Esophagus squamous epithelium (tissue), 5 donors: ENCODE measurements at regions of chr4 and their contacts with region 1.

Region 1: GRCh38 chr4:128863312-128864075 is 54.0 kb downstream of the JADE1 start:
- DNase-seq: no peak
- H3K4me3 ChIP-seq: no peak overlapping the region
- H3K27ac ChIP-seq: peak overlapping the region in 1 of 4 donors; percentile 23
- H3K4me1 ChIP-seq: peaks cover 0 to 47% (median 0%) of the 10 kb centered on the region in 3 donors
- H3K27me3 ChIP-seq: no peaks in the 10 kb centered on the region
- CTCF ChIP-seq: peak; percentile 79 to 88 (median 84)
- POLR2A ChIP-seq: no peak

Region 2: GRCh38 chr4:128191115-128191781 is 672.2 kb before region 1 on chr4:
- intact Hi-C with region 1: loop called (anchors 10 kb)
- DNase-seq: no peak
- H3K4me3 ChIP-seq: no peak overlapping the region
- H3K27ac ChIP-seq: no peak overlapping the region
- H3K4me1 ChIP-seq: peaks cover 0 to 8% (median 0%) of the 10 kb centered on the region in 3 donors
- H3K27me3 ChIP-seq: no peaks in the 10 kb centered on the region
- CTCF ChIP-seq: peak; percentile 67 to 83 (median 75)
- POLR2A ChIP-seq: no peak

Region 3: GRCh38 chr4:128454281-128455075 is 409.0 kb before region 1 on chr4:
- intact Hi-C with region 1: loop called (anchors 10 kb)
- DNase-seq: peak; percentile 5
- H3K4me3 ChIP-seq: no peak overlapping the region
- H3K27ac ChIP-seq: no peak overlapping the region
- H3K4me1 ChIP-seq: peaks cover 0 to 25% (median 0%) of the 10 kb centered on the region in 3 donors
- H3K27me3 ChIP-seq: no peaks in the 10 kb centered on the region
- CTCF ChIP-seq: peak; percentile 54 to 82 (median 72)
- POLR2A ChIP-seq: no peak

Region 4: GRCh38 chr4:128565565-128566186 is 297.8 kb before region 1 on chr4:
- intact Hi-C with region 1: loop called (anchors 10 kb)
- DNase-seq: no peak
- H3K4me3 ChIP-seq: no peak overlapping the region
- H3K27ac ChIP-seq: no peak overlapping the region
- H3K4me1 ChIP-seq: peaks cover 0 to 18% (median 16%) of the 10 kb centered on the region in 3 donors
- H3K27me3 ChIP-seq: no peaks in the 10 kb centered on the region
- CTCF ChIP-seq: peak in 5 of 6 experiments; percentile 13 to 46 (median 29)
- POLR2A ChIP-seq: no peak

Region 5: DNA sequence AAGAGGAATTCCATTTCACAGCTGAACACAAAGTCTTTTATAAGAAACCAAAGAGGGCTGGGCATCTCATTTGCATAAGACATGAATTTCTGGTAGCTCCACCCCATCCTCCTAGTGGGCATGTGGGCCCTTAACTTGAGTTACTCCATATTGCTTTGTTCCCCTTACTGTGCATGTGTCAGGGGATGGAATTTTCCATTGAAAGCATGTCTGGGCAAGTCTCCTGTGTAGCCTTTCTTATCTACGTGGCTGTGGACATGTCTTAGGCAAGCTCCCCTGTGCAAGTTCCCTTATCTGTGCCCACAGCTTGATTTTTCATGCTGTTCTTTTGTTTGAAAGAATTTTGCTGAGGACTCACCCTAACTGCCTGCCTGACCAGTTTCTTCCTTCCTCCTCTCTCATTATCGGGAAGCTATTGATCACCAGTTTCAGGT is 177.4 kb before region 1 on chr4:
- intact Hi-C with region 1: no loop called
- DNase-seq: no peak
- H3K4me3 ChIP-seq: no peak overlapping the region
- H3K27ac ChIP-seq: no peak overlapping the region
- H3K4me1 ChIP-seq: peaks cover 0 to 4% (median 0%) of the 10 kb centered on the region in 3 donors
- H3K27me3 ChIP-seq: no peaks in the 10 kb centered on the region
- CTCF ChIP-seq: no peak
- POLR2A ChIP-seq: no peak

Region 6: DNA sequence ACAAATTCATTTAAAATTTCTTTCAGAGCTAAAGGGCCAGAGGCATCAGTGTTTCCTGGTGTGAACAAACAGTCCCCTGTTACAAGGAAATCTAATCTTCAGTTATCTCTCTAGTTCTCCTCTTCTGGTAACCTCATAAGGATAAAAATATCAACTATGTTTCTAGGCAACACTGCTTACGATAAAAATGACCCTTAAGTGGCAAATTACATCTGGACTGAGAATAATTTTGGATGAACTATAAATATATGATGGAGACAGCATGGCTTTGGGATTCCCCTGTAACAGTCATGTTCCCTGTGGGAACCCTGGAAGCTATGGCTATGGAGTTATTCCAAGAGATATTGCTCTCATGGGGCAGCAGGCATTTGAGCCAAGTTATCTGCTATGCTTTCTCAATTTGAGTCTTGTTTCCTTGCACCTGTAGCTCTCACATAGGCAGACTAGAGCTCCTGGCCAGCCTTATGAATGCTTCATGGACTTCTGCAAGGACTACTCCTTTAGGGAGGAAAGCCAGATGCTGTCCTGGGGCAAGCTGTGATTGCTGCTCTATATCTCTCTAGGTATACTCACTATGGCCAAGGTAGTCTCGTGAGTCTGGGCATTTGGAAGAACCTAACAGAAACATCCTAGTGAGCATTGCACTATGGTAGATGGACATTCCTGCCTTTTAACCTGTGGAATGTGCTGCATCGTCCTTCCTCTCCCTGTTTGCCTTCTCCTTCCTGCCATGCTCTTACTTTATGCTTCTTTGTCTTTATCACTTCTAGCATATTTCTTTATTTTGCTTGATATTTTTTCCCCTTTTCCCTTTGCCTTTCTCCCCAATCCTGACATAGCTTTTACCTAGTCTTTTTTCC is 246.7 kb after region 1 on chr4:
- intact Hi-C with region 1: no loop called
- DNase-seq: no peak
- H3K4me3 ChIP-seq: no peak overlapping the region
- H3K27ac ChIP-seq: no peak overlapping the region
- H3K4me1 ChIP-seq: no peaks in the 10 kb centered on the region
- H3K27me3 ChIP-seq: no peaks in the 10 kb centered on the region
- CTCF ChIP-seq: no peak
- POLR2A ChIP-seq: no peak